PC-9 (cell line): ENCODE measurements at regions of chr20 and their contacts with region 1.

Region 1: DNA sequence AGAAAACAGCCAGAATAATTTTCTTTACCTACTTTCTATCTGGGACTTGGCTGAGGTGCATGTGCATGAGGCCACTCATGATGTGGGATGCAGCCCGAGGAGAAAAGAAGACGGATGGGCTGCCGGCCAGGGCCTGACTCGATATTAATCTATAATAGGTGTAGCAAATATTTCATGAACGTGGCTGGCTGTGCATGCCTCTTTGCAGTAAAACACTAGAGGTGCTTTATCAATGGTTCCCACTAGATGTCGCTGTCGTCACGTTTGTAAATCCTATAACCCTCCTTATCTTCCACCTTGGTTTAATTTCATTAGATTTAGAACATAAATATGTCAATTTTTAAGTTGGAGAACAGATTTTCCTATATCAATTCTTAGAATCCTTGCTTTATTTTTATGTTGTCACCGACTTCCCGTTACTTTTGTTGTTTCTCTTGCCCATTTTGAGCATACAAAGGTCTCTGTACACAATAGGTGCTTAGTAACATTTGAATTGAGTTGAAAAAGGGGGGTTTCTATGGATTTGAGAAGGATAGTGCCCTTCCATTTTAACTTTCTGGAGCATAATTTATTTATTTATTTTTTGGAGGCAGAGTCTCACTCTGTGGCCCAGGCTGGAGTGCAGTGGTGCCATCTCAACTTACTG is 19.6 kb upstream of the FERMT1 start:
- DNase-seq: peak in 1 of 2 experiments; percentile 33
- H3K4me3 ChIP-seq: no peak overlapping the region
- H3K27ac ChIP-seq: no peak overlapping the region
- H3K4me1 ChIP-seq: no peaks in the 10 kb centered on the region
- H3K27me3 ChIP-seq: no peaks in the 10 kb centered on the region
- CTCF ChIP-seq: peak; percentile 89

Region 2: GRCh38 chr20:5945963-5946362 is 196.5 kb before region 1 on chr20:
- CTCF ChIA-PET with region 1: no interaction called
- POLR2A ChIA-PET with region 1: no interaction called
- intact Hi-C with region 1: no loop called
- DNase-seq: peak in 1 of 2 experiments; percentile 55
- H3K4me3 ChIP-seq: no peak overlapping the region
- H3K27ac ChIP-seq: no peak overlapping the region
- H3K4me1 ChIP-seq: peaks cover 15% of the 10 kb centered on the region
- H3K27me3 ChIP-seq: no peaks in the 10 kb centered on the region
- CTCF ChIP-seq: no peak

Region 3: DNA sequence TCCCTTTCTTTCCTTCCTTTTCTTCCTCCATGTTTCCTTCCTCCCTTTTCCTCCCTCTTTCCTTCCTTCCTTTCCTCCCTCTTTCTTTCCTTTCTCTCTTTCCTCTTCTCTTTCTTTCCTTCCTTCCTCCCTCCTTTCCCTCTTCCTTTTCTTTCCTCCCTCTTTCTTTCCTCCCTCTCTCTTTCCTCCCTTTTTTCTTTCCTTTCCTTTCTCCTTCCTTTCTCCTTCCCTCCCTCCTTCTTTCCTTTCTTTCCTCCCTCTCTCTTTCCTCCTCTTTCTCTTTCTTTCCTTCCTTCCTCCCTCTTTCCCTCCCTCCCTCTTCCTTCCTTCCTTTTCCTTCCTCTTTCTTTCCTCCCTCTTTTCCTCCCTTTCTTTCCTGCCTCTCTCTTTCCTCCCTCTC is 66.6 kb after region 1 on chr20:
- CTCF ChIA-PET with region 1: no interaction called
- POLR2A ChIA-PET with region 1: no interaction called
- intact Hi-C with region 1: no loop called
- DNase-seq: no peak
- H3K4me3 ChIP-seq: no peak overlapping the region
- H3K27ac ChIP-seq: no peak overlapping the region
- H3K4me1 ChIP-seq: no peaks in the 10 kb centered on the region
- H3K27me3 ChIP-seq: peaks cover 5% of the 10 kb centered on the region; the same call in 1 of the 2 replicates
- CTCF ChIP-seq: no peak

Region 4: GRCh38 chr20:6767536-6768227 is 625.2 kb after region 1 on chr20 and contains the start of gene BMP2:
- CTCF ChIA-PET with region 1: no interaction called
- POLR2A ChIA-PET with region 1: no interaction called
- intact Hi-C with region 1: loop called (anchors 10 kb)
- DNase-seq: no peak
- H3K4me3 ChIP-seq: no peak within 1 kb of the TSS; the same call in 1 of the 2 replicates
- H3K27ac ChIP-seq: no peak within 1 kb of the TSS
- H3K4me1 ChIP-seq: no peaks in the 10 kb centered on the region
- H3K27me3 ChIP-seq: no peaks in the 10 kb centered on the region; the same call in 1 of the 2 replicates
- CTCF ChIP-seq: no peak
- total RNA-seq, gene BMP2: not detected in 2 replicates

Region 5: GRCh38 chr20:7285918-7286556 is 1143.6 kb after region 1 on chr20:
- CTCF ChIA-PET with region 1: no interaction called
- POLR2A ChIA-PET with region 1: no interaction called
- intact Hi-C with region 1: loop called (anchors 2 kb)
- DNase-seq: peak; percentile 36 to 40
- H3K4me3 ChIP-seq: no peak overlapping the region
- H3K27ac ChIP-seq: no peak overlapping the region
- H3K4me1 ChIP-seq: no peaks in the 10 kb centered on the region
- H3K27me3 ChIP-seq: no peaks in the 10 kb centered on the region
- CTCF ChIP-seq: peak; percentile 86